CD4-positive, alpha-beta T cell (primary cell): ENCODE measurements at regions of chr11 and their contacts with region 1.

Region 1: GRCh38 chr11:6362873-6363678 is 27.2 kb upstream of the SMPD1 start:
- DNase-seq: peak; percentile 42 to 77 (median 56)
- ATAC-seq: peak; percentile 89
- H3K4me3 ChIP-seq: no peak overlapping the region
- H3K4me3 Mint-ChIP-seq: no peak overlapping the region
- H3K27ac ChIP-seq: no peak overlapping the region
- H3K27ac Mint-ChIP-seq: no peak overlapping the region
- H3K4me1 ChIP-seq: no peaks in the 10 kb centered on the region
- H3K4me1 Mint-ChIP-seq: peaks cover 4% of the 10 kb centered on the region
- H3K27me3 ChIP-seq: peaks cover 0 to 2% of the 10 kb centered on the region in 2 experiments
- H3K27me3 Mint-ChIP-seq: no peaks in the 10 kb centered on the region
- CTCF ChIP-seq: peak; percentile 62

Region 2: DNA sequence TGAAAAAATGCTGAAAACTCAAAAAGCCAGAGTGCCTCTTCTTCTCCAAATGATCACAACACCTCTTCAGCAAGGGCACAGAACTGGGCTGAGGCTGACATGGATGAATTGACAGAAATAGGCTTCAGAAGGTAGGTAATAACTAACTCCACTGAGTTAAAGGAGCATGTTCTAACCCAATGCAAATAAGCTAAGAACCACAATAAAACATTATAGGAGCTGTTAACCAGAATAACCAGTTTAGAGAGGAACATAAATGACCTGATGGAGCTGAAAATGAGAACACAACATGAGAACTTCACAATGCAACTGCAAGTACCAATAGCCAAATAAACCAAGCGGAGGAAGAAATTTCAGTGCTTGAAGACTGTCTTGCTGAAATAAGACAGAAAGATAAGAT is 246.4 kb before region 1 on chr11:
- CTCF ChIA-PET with region 1: no interaction called
- POLR2A ChIA-PET with region 1: no interaction called
- intact Hi-C with region 1: no loop called
- DNase-seq: no peak
- ATAC-seq: no peak
- H3K4me3 ChIP-seq: no peak overlapping the region
- H3K4me3 Mint-ChIP-seq: no peak overlapping the region
- H3K27ac ChIP-seq: no peak overlapping the region
- H3K27ac Mint-ChIP-seq: no peak overlapping the region
- H3K4me1 ChIP-seq: no peaks in the 10 kb centered on the region
- H3K4me1 Mint-ChIP-seq: no peaks in the 10 kb centered on the region
- H3K27me3 ChIP-seq: peaks cover 2 to 8% of the 10 kb centered on the region in 2 experiments
- H3K27me3 Mint-ChIP-seq: peaks cover 14% of the 10 kb centered on the region
- CTCF ChIP-seq: no peak

Region 3: DNA sequence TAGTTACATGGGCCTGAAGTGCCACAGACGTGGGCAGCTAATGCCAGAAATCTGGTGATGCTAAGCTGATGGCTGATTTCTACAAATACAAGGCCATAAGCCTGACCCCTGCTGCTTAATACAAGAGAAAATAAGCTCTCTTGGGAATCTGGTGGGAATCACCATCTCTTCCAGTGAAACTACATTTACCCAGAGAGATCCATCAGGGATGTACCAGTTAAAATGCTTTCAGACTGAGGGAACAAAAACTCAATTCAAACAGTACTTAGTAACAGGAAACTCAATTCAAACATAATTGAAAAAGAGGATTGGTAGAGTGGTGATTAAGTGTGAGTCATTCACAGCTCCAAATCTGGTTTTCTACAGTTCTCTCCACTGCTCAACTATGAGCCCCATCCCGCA is 41.1 kb before region 1 on chr11:
- CTCF ChIA-PET with region 1: no interaction called
- POLR2A ChIA-PET with region 1: no interaction called
- intact Hi-C with region 1: loop called in 1 of 2 experiments (anchors 2 kb)
- DNase-seq: peak in 1 of 14 experiments; percentile 10
- ATAC-seq: no peak
- H3K4me3 ChIP-seq: no peak overlapping the region
- H3K4me3 Mint-ChIP-seq: no peak overlapping the region
- H3K27ac ChIP-seq: no peak overlapping the region
- H3K27ac Mint-ChIP-seq: no peak overlapping the region
- H3K4me1 ChIP-seq: peaks cover 19% of the 10 kb centered on the region
- H3K4me1 Mint-ChIP-seq: peaks cover 12% of the 10 kb centered on the region
- H3K27me3 ChIP-seq: peaks cover 36 to 38% of the 10 kb centered on the region in 2 experiments
- H3K27me3 Mint-ChIP-seq: peaks cover 76% of the 10 kb centered on the region
- CTCF ChIP-seq: no peak

Region 4: DNA sequence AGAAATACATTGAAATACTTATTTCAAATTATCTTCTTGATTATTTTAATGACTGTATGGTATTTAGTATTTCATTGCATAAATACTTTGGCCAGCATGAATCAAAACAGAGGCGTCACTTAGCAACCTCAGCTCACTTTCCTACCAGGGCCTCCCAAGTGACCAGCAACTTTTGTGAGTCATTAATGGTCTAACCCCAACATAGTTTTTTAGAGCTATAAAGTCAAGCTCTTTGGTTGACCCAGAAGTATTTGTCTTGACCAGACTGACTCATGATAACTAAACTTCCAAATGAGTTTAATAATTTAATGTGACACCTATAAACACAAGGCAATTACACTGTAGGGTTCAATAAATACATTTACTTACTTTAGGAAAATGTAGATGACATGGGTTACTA is 697.8 kb after region 1 on chr11:
- CTCF ChIA-PET with region 1: no interaction called
- POLR2A ChIA-PET with region 1: no interaction called
- intact Hi-C with region 1: no loop called
- DNase-seq: no peak
- ATAC-seq: no peak
- H3K4me3 ChIP-seq: no peak overlapping the region
- H3K4me3 Mint-ChIP-seq: no peak overlapping the region
- H3K27ac ChIP-seq: no peak overlapping the region
- H3K27ac Mint-ChIP-seq: no peak overlapping the region
- H3K4me1 ChIP-seq: no peaks in the 10 kb centered on the region
- H3K4me1 Mint-ChIP-seq: no peaks in the 10 kb centered on the region
- H3K27me3 ChIP-seq: peaks cover 0 to 4% of the 10 kb centered on the region in 2 experiments
- H3K27me3 Mint-ChIP-seq: peaks cover 5% of the 10 kb centered on the region
- CTCF ChIP-seq: no peak